Keratinocyte (primary cell): ENCODE measurements at regions of chr15 and their contacts with region 1.

Region 1: GRCh38 chr15:100997442-100997841 is 78.3 kb downstream of the LRRK1 start:
- DNase-seq: no peak
- H3K4me3 ChIP-seq: no peak overlapping the region
- H3K27ac ChIP-seq: no peak overlapping the region
- H3K4me1 ChIP-seq: no peaks in the 10 kb centered on the region
- H3K27me3 ChIP-seq: no peaks in the 10 kb centered on the region
- CTCF ChIP-seq: no peak

Region 2: GRCh38 chr15:100879464-100880138 is 117.8 kb before region 1 on chr15 and contains the start of gene ALDH1A3:
- dilution Hi-C with region 1: no loop called
- DNase-seq: no peak
- H3K4me3 ChIP-seq: peak within 1 kb of the TSS; percentile 54 to 85 (median 78)
- H3K27ac ChIP-seq: peak within 1 kb of the TSS; percentile 47
- H3K4me1 ChIP-seq: peaks cover 21% of the 10 kb centered on the region
- H3K27me3 ChIP-seq: no peaks in the 10 kb centered on the region
- CTCF ChIP-seq: no peak
- polyA plus RNA-seq, gene ALDH1A3: 85.0 to 356 TPM (median 218 TPM) in 3 replicates

Region 3: DNA sequence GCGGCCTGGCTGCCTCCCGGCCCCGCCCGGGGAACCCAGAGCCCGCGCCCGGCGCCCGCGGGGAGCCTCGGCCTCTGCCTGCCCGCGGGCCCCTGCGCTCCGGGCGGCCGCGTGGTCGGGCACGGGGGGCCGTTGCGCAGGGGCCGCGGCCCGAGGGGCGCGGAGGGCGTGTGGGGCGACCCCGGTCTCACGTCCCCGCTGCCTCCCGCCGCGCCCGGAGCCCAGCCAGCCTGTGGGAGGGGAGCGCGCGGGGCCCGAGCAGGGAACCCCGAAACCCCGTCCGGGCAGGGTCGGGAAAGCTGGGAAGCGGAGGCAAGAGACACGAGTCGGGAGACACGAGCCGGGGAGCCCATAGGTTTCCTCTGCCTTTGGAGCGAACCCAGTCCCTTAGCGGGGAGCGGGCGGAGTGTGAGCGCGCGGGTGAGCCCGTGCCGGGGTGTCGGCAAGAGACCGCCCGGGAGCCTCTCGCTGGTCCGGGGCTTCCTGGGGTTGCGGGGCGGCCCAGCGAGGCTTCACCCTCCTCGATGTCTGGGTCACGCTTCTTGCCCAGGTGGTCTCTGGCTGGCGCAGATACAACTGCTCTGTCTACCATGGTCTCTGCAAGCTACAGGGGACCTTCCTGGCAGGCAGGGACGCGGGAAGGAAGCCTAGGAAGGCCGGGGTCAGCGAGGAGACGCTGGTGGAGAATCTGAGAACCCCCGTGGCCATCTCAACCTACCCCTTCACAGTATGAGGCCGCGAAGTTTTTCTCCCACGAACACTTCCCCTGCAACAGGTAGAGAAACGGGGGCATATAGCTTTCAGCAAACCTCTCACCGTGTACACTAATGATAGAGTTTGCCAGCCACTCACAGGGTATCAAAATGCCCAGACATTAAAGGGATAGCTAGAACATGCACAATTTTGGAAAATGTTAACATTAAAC is 77.7 kb before region 1 on chr15:
- dilution Hi-C with region 1: loop called (anchors 5 kb)
- DNase-seq: no peak
- H3K4me3 ChIP-seq: peak overlapping the region; percentile 56 to 78 (median 77)
- H3K27ac ChIP-seq: peak overlapping the region; percentile 46
- H3K4me1 ChIP-seq: peaks cover 15% of the 10 kb centered on the region
- H3K27me3 ChIP-seq: no peaks in the 10 kb centered on the region
- CTCF ChIP-seq: no peak

Region 4: GRCh38 chr15:101068961-101069653 is 71.7 kb after region 1 on chr15:
- dilution Hi-C with region 1: no loop called
- DNase-seq: peak; percentile 30
- H3K4me3 ChIP-seq: no peak overlapping the region
- H3K27ac ChIP-seq: no peak overlapping the region
- H3K4me1 ChIP-seq: peaks cover 27% of the 10 kb centered on the region
- H3K27me3 ChIP-seq: no peaks in the 10 kb centered on the region
- CTCF ChIP-seq: peak; percentile 8 to 23 (median 17)